ENCODE measurements at regions of chr6 and their contacts with region 1.

Region 1: DNA sequence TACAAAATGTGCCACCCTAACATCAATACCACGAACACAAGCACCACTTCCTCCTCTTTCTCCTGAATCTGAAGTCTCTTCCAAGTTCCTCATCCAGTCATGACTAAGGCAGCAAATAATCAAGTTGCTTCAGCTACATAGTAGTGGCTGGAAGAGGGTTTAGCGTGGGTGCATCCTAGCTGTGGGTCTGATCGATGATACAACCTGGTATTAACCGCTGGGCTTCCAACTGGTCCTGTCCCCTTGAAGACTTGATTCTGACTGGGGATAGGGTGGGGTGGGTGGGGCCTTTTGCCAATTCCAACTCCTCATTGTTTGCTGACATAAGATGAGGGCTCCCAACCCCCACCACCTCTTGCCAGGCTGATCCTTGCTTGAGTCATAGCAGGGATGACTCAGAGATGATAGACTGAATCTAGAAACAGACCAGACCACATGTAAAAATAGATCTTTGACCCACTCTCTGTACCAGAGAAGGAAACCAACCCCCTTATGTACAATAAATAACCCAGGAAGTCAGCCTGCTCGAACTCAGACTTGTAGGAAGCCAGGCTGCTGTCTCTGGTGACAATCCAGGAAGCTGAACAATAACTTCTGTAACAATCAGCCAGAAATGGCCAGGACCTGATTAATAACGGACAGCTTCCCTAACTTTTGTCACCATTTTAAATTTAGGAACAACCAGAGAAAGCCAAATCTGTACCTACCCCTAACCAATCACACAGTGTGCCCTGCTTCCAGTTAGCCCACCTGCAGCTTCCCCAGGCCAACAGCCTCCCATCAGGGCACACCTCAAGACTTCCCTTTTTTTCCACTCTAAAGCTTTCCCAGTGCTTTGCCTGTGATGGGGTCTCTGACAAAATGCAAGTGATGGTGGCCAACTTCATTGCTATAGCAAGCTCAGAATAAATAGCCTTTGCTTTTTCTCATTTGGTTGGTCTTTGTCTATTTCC is 68.9 kb upstream of the FAM184A start:
- DNase-seq: peak; percentile 67
- H3K4me3 ChIP-seq: no peak overlapping the region
- H3K27ac ChIP-seq: no peak overlapping the region
- H3K4me1 ChIP-seq: no peaks in the 10 kb centered on the region
- H3K27me3 ChIP-seq: no peaks in the 10 kb centered on the region
- CTCF ChIP-seq: no peak

Region 2: GRCh38 chr6:119349323-119350042 is 202.1 kb after region 1 on chr6 and contains the start of gene MAN1A1:
- CTCF ChIA-PET with region 1: no interaction called
- POLR2A ChIA-PET with region 1: no interaction called
- intact Hi-C with region 1: loop called (anchors 5 kb)
- DNase-seq: peak; percentile 82
- H3K4me3 ChIP-seq: peak within 1 kb of the TSS; percentile 52
- H3K27ac ChIP-seq: no peak within 1 kb of the TSS
- H3K4me1 ChIP-seq: peaks cover 6% of the 10 kb centered on the region
- H3K27me3 ChIP-seq: peaks cover 96% of the 10 kb centered on the region
- CTCF ChIP-seq: no peak
- total RNA-seq, gene MAN1A1: 0.06 TPM in 1 of 2 replicates, not detected in the other

Region 3: DNA sequence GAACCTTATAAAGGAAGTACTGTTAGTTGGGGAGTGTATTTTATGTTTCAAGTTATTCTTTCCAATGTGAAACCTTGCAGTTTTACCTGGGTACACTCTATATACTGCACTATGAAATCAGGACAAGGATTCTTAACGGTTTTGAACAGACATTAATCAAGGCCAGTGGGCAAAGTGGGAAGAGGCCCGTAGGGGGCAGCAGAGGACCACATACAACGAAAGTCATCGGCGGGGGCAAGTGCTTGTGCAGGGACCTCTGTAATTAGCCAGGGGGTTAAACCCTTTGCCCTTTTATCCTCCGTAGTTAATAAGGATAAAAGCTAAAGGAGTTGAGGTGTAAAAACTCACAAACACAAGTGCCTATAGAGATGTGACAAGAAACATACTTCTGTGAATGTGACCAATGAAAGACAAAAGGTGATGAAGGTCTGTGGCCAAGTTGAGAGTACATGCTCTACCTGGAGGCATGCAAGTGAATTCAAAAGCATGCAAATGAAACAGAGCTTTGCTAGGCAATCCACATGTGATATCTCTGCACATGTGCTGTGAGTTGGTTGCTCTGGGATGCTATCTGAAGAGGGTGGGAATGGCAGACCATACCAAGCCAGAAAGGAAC is 594.9 kb after region 1 on chr6:
- CTCF ChIA-PET with region 1: no interaction called
- POLR2A ChIA-PET with region 1: no interaction called
- intact Hi-C with region 1: loop called (anchors 5 kb)
- DNase-seq: peak; percentile 51
- H3K4me3 ChIP-seq: no peak overlapping the region
- H3K27ac ChIP-seq: no peak overlapping the region
- H3K4me1 ChIP-seq: no peaks in the 10 kb centered on the region
- H3K27me3 ChIP-seq: no peaks in the 10 kb centered on the region
- CTCF ChIP-seq: peak; percentile 88

Region 4: DNA sequence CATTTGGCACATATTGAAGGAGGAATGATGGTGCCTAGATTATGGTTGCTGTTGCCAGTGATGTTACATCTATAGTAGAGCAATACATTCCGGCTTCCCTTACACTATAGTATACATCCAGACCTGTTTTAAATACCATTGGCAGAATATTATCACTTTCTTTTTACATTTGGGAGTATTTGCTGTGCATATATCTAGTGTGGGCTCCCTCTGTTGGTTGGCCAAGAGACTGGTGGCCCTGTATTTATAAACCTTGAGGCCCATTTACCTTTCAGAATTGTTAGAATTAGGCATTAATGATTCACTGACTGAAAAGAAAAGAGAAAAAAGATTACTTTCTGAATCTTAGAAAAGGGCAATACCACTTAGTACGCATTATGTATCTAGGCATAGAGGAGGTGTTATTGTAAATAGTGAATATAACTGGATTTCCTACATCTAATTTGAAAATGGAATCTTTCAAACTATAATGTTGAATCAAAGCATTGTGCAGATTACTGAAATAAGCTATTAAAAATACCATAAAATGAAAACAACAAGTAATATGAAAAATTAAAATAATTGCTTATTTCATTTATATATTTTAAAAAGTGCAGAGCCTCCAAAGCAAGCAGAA is 831.0 kb after region 1 on chr6:
- CTCF ChIA-PET with region 1: no interaction called
- POLR2A ChIA-PET with region 1: no interaction called
- intact Hi-C with region 1: loop called (anchors 5 kb)
- DNase-seq: peak; percentile 3
- H3K4me3 ChIP-seq: no peak overlapping the region
- H3K27ac ChIP-seq: no peak overlapping the region
- H3K4me1 ChIP-seq: no peaks in the 10 kb centered on the region
- H3K27me3 ChIP-seq: no peaks in the 10 kb centered on the region
- CTCF ChIP-seq: peak; percentile 48

Region 5: DNA sequence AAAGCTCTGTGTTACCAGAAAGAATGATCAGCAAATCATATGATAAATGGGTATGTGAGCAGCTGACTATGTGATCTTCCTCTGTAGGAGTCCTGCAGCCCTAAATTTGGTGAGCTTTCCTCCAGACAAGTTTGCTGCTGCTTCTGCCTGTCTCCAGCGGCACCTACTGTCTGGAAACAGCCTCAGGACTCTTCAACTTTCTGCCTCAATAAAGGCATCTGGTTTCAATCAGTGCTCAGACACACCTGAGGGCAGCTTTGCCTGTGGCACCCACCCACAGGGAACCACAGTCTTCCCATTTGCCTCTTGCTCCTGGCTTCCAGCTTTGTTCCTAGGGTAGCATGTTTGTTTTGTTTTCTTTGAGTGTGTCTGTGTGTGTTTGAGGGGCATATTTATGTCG is 930.1 kb after region 1 on chr6:
- CTCF ChIA-PET with region 1: no interaction called
- POLR2A ChIA-PET with region 1: no interaction called
- intact Hi-C with region 1: loop called (anchors 10 kb)
- DNase-seq: no peak
- H3K4me3 ChIP-seq: no peak overlapping the region
- H3K27ac ChIP-seq: no peak overlapping the region
- H3K4me1 ChIP-seq: no peaks in the 10 kb centered on the region
- H3K27me3 ChIP-seq: no peaks in the 10 kb centered on the region
- CTCF ChIP-seq: no peak

Region 6: DNA sequence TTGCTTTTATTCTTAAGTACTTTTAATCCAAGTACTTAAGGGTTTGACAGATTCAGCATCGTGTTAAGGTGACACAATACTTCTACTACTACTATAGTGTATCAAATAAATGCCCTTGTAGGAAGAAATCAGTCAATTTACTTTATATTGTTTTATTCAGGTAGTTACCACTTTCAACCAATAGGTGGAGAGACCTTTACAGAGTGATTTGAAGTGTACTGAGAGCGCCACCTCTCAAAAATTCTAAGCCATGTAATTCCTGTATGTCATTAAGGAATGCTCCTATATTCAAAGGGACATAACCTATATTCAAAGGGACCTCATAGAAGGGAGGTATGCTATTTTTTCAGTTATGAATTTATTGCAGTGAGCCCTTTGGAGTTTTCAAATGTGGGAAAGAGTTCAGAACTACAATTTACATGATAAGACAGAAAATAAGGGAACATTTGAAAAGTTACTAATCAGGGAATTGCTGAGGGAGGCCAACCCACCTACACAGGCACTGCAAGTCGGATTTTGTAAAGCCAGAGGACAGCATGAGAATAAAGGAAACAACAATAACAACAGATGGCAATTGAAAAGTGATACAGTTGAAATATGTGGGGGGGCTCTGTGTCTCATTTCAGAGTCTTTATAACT is 1231.3 kb after region 1 on chr6:
- CTCF ChIA-PET with region 1: no interaction called
- POLR2A ChIA-PET with region 1: no interaction called
- intact Hi-C with region 1: loop called (anchors 5 kb)
- DNase-seq: peak; percentile 48
- H3K4me3 ChIP-seq: no peak overlapping the region
- H3K27ac ChIP-seq: no peak overlapping the region
- H3K4me1 ChIP-seq: no peaks in the 10 kb centered on the region
- H3K27me3 ChIP-seq: no peaks in the 10 kb centered on the region
- CTCF ChIP-seq: peak; percentile 61